SK-N-SH (cell line): ENCODE measurements at regions of chr10 and their contacts with region 1.

Region 1: DNA sequence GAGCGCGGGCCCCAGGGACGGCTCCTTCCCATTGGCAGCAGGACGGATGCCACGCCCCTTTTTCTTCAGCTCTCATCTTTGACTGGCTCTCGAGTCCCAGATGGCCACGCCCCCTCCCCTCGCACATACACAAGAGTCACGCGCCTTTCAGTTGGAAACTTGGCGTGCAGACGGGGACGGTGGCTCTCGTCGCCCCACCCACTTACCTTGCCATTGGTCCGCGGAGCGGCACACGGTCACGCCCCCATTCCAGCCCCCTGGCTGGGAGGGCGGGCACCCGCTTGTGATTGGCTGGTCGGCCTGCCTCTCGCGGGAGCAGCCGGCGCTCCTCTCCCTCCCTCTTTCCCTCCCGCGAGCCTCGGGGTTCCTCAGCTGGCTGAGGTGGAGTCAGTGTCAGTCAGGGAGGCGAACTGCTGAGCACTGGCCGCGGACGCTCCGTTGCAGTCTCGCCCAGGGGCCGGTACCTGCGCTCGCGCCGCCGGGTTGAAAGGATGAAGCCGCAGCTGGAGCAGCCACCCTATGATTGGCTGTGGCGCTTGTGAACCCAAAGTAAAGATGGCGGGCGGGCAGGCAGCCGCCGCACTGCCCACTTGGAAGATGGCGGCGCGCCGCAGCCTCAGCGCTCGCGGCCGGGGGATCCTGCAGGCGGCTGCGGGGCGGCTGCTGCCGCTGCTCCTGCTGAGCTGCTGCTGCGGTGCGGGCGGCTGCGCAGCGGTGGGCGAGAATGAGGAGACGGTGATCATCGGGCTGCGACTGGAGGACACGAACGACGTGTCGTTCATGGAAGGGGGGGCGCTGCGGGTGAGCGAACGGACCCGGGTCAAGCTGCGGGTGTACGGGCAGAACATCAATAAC is at the start of gene CNNM2:
- DNase-seq: peak; percentile 98
- H3K4me3 ChIP-seq: peak within 1 kb of the TSS; percentile 97 to 99
- H3K27ac ChIP-seq: peak within 1 kb of the TSS; percentile 76 to 89
- H3K4me1 ChIP-seq: peaks cover 13 to 28% of the 10 kb centered on the region in 2 experiments; a peak in 3 of 4 replicates
- H3K27me3 ChIP-seq: no peaks in the 10 kb centered on the region
- CTCF ChIP-seq: peak; percentile 39
- EP300 ChIP-seq: no peak; a peak in 1 of 4 replicates
- RAD21 ChIP-seq: no peak
- polyA plus RNA-seq, gene CNNM2: 2.2 and 4.0 TPM in 2 replicates

Region 2: DNA sequence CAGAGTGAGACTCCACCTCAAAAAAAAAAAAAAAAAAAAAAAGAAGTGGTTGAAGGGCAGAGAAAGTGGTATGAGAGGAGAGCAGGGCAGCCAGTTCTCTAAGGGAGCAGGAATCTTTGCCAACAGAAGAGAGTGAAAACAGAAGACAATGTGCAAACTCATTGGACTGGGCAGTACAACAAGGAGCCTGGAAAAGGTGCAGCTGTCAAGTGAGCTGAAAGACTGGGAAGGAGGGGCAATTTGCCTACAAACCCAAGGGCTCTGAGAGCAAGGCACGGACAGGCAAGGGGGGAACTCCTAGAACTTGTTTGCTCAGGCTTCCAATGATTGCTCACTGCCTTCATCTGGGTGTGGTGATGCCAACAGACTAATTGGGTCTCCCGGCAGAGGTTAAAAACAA is 425.2 kb before region 1 on chr10:
- CTCF ChIA-PET with region 1: no interaction called
- POLR2A ChIA-PET with region 1: no interaction called
- DNase-seq: no peak
- H3K4me3 ChIP-seq: no peak overlapping the region
- H3K27ac ChIP-seq: no peak overlapping the region
- H3K4me1 ChIP-seq: no peaks in the 10 kb centered on the region; a peak in 1 of 4 replicates
- H3K27me3 ChIP-seq: no peaks in the 10 kb centered on the region
- CTCF ChIP-seq: no peak
- EP300 ChIP-seq: no peak
- RAD21 ChIP-seq: no peak

Region 3: GRCh38 chr10:102710610-102711009 is 207.6 kb before region 1 on chr10:
- CTCF ChIA-PET with region 1: no interaction called
- POLR2A ChIA-PET with region 1: no interaction called
- DNase-seq: no peak
- H3K4me3 ChIP-seq: no peak overlapping the region
- H3K27ac ChIP-seq: peak overlapping the region; percentile 2 to 67
- H3K4me1 ChIP-seq: peaks cover 10 to 22% of the 10 kb centered on the region in 2 experiments
- H3K27me3 ChIP-seq: no peaks in the 10 kb centered on the region
- CTCF ChIP-seq: peak; percentile 23; the same call in 1 of the 2 replicates
- EP300 ChIP-seq: peak in 1 of 2 experiments; percentile 36; a peak in 1 of 4 replicates
- RAD21 ChIP-seq: no peak

Region 4: GRCh38 chr10:102904346-102904745 is 13.8 kb before region 1 on chr10:
- CTCF ChIA-PET with region 1: interaction called, 69 read pairs
- POLR2A ChIA-PET with region 1: interaction called, 3 read pairs
- DNase-seq: no peak
- H3K4me3 ChIP-seq: no peak overlapping the region
- H3K27ac ChIP-seq: no peak overlapping the region
- H3K4me1 ChIP-seq: no peaks in the 10 kb centered on the region
- H3K27me3 ChIP-seq: no peaks in the 10 kb centered on the region
- CTCF ChIP-seq: no peak
- EP300 ChIP-seq: no peak
- RAD21 ChIP-seq: no peak

Region 5: GRCh38 chr10:102935505-102935904 is 17.3 kb after region 1 on chr10:
- CTCF ChIA-PET with region 1: no interaction called
- POLR2A ChIA-PET with region 1: no interaction called
- DNase-seq: no peak
- H3K4me3 ChIP-seq: no peak overlapping the region
- H3K27ac ChIP-seq: no peak overlapping the region
- H3K4me1 ChIP-seq: no peaks in the 10 kb centered on the region
- H3K27me3 ChIP-seq: no peaks in the 10 kb centered on the region
- CTCF ChIP-seq: no peak
- EP300 ChIP-seq: no peak
- RAD21 ChIP-seq: no peak

Region 6: GRCh38 chr10:103044942-103045489 is 126.8 kb after region 1 on chr10:
- CTCF ChIA-PET with region 1: interaction called, 11 read pairs
- POLR2A ChIA-PET with region 1: no interaction called
- DNase-seq: no peak
- H3K4me3 ChIP-seq: no peak overlapping the region
- H3K27ac ChIP-seq: no peak overlapping the region
- H3K4me1 ChIP-seq: no peaks in the 10 kb centered on the region
- H3K27me3 ChIP-seq: no peaks in the 10 kb centered on the region
- CTCF ChIP-seq: no peak
- EP300 ChIP-seq: no peak
- RAD21 ChIP-seq: no peak

Region 7: GRCh38 chr10:103069453-103070331 is 151.5 kb after region 1 on chr10:
- CTCF ChIA-PET with region 1: interaction called, 264 read pairs
- POLR2A ChIA-PET with region 1: interaction called, 6 read pairs
- DNase-seq: peak; percentile 77
- H3K4me3 ChIP-seq: no peak overlapping the region; a peak in 1 of 4 replicates
- H3K27ac ChIP-seq: no peak overlapping the region
- H3K4me1 ChIP-seq: peaks cover 0 to 22% of the 10 kb centered on the region in 2 experiments; a peak in 1 of 4 replicates
- H3K27me3 ChIP-seq: no peaks in the 10 kb centered on the region
- CTCF ChIP-seq: peak; percentile 83
- EP300 ChIP-seq: no peak
- RAD21 ChIP-seq: peak; percentile 93

Region 8: GRCh38 chr10:103333925-103334520 is 415.8 kb after region 1 on chr10:
- CTCF ChIA-PET with region 1: interaction called, 20 read pairs
- POLR2A ChIA-PET with region 1: no interaction called
- DNase-seq: peak; percentile 42
- H3K4me3 ChIP-seq: no peak overlapping the region; a peak in 1 of 4 replicates
- H3K27ac ChIP-seq: 0 out of 4 replicates have a peak overlapping the region, but pooled peaks of 1 of the 2 experiments have one; percentile 15
- H3K4me1 ChIP-seq: no peaks in the 10 kb centered on the region
- H3K27me3 ChIP-seq: no peaks in the 10 kb centered on the region
- CTCF ChIP-seq: peak; percentile 83
- EP300 ChIP-seq: no peak
- RAD21 ChIP-seq: peak; percentile 58